ENCODE measurements at regions of chr2 and their contacts with region 1.

Region 1: DNA sequence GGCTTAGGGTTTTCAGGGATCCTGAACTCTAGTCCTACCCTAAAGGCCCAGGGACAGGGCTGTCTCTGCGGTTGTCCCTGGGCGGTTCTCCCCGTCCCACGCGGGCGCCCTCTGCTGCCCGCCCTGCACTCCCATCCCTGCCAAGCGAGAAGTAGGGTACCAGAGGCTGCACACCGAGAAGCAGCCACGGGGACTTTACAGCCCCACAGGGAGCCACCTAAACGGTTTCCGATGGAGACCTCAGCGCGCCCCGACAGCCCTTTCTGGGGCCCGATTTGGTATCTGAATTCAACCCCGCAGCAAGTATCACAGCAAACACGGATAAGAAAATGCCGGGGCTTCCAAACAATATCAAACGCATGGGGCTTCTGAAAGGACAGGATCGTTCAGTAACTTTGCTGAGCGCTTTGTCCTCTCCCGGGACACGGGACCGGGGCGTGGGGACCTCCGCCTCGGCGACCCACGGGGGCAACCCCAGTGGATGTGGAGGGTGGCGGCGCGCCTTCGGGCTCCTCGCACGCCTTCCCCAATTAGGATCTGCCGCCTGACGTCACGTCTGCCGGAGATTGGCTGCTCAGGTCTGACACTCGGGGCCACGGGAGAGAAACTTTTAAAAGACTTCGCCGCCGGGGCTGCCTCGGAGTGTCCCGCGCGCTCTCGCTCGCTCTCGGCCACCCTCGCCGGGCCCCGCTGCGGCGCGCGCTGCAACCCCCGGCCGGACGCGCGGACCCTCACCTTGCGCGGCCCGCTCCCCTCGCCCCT is at the start of gene LTBP1:
- DNase-seq: peak; percentile 85 to 92 (median 87)
- ATAC-seq: peak; percentile 84 to 93 (median 87)
- H3K4me3 ChIP-seq: peak within 1 kb of the TSS; percentile 56 to 94 (median 79)
- H3K27ac ChIP-seq: peak within 1 kb of the TSS; percentile 76 to 95 (median 91)
- H3K4me1 ChIP-seq: peaks cover 0 to 33% (median 7%) of the 10 kb centered on the region in 12 donors
- H3K27me3 ChIP-seq: peaks cover 0 to 24% (median 0%) of the 10 kb centered on the region in 9 donors
- CTCF ChIP-seq: peak; percentile 62 to 93 (median 78)
- POLR2A ChIP-seq: peak in 1 of 2 donors; percentile 80
- total RNA-seq, gene LTBP1: 63.4 to 150 (median 103) TPM

Region 2: DNA sequence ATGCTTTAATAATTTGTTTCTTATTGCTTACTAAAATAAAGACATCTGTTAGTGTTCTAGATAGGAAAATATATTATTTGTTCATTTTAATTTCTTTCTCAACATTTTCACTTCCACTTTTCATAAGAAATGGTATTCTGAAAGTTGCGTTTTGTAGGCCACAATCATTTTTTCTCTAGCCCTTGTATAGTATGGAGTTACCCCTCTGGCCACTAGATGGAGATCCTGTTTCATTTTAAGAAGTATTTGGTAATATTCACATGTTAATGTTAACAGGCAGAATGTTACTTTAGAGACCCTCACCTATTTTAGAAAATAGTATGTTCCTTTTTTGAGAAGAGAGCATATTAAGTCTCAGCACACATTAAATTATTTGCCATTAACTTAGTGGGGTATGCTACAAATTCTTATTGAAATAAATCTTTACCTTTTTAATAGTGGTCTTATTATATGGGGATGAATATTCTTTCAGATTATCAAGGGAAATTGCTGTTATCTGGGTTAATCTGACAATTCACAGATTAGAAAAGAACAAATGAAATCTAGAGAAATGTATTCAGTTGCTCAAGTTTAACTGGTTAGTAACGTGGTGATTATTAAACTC is 392.6 kb before region 1 on chr2:
- intact Hi-C with region 1: loop called in 1 of 10 experiments (anchors 10 kb)
- DNase-seq: no peak
- ATAC-seq: peak in 3 of 4 donors; percentile 63 to 73 (median 64)
- H3K4me3 ChIP-seq: no peak overlapping the region
- H3K27ac ChIP-seq: no peak overlapping the region
- H3K4me1 ChIP-seq: peaks cover 0 to 5% (median 0%) of the 10 kb centered on the region in 12 donors
- H3K27me3 ChIP-seq: no peaks in the 10 kb centered on the region
- CTCF ChIP-seq: peak; percentile 57 to 81 (median 72)
- POLR2A ChIP-seq: no peak

Region 3: DNA sequence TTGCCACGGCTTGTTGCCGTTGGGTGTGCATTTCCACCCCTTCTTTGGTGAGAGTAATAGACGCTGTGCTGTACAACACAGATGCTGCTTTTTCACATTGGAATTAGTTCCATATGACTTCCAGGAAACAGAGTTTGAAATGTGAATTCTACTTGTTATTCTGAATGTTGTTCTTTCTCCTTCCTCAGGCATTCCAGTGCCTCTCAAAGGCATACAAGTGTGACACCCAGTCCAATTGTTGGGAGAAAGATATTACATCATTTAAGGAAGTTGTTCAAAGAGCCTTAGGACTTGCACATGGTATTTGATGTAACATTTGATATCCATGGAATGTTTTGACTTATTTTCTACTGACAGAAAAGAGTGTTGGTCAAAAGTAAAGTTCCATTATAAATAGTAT is 134.2 kb before region 1 on chr2:
- intact Hi-C with region 1: no loop called
- DNase-seq: no peak
- ATAC-seq: no peak
- H3K4me3 ChIP-seq: no peak overlapping the region
- H3K27ac ChIP-seq: no peak overlapping the region
- H3K4me1 ChIP-seq: peaks cover 0 to 7% (median 0%) of the 10 kb centered on the region in 12 donors
- H3K27me3 ChIP-seq: no peaks in the 10 kb centered on the region
- CTCF ChIP-seq: no peak
- POLR2A ChIP-seq: no peak

Region 4: GRCh38 chr2:32849456-32850194 is 96.9 kb before region 1 on chr2:
- intact Hi-C with region 1: loop called in 1 of 10 experiments (anchors 10 kb)
- DNase-seq: peak in 1 of 5 donors; percentile 33
- ATAC-seq: peak in 3 of 4 donors; percentile 52 to 57 (median 54)
- H3K4me3 ChIP-seq: no peak overlapping the region
- H3K27ac ChIP-seq: no peak overlapping the region
- H3K4me1 ChIP-seq: no peaks in the 10 kb centered on the region
- H3K27me3 ChIP-seq: no peaks in the 10 kb centered on the region
- CTCF ChIP-seq: no peak
- POLR2A ChIP-seq: no peak

Region 5: DNA sequence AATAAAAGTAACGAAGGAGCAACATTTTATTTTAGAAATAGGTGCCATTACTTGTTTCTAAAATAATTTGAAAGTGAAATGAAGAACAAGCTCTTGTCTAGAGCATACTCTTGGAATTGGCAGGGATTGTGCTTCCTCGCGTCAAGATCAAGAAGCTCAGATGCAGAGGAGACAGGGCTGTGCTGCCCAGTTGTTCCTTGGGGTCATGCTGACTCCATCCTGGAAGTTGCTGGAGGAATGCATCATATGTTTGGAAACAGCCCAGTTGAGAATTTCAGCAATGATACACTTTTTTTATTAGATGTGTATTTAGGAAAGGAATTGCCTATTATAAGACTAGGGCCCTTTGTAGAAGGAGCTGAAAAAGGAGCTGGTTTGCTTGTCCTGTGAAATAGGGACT is 17.4 kb after region 1 on chr2:
- intact Hi-C with region 1: no loop called
- DNase-seq: peak in 1 of 5 donors; percentile 32
- ATAC-seq: no peak
- H3K4me3 ChIP-seq: no peak overlapping the region
- H3K27ac ChIP-seq: no peak overlapping the region
- H3K4me1 ChIP-seq: peaks cover 0 to 45% (median 19%) of the 10 kb centered on the region in 12 donors
- H3K27me3 ChIP-seq: no peaks in the 10 kb centered on the region
- CTCF ChIP-seq: no peak
- POLR2A ChIP-seq: no peak

Region 6: GRCh38 chr2:33022989-33023727 is 76.7 kb after region 1 on chr2:
- intact Hi-C with region 1: loop called in 5 of 10 experiments (anchors 5 to 10 kb)
- DNase-seq: no peak
- ATAC-seq: peak in 1 of 4 donors; percentile 49
- H3K4me3 ChIP-seq: no peak overlapping the region
- H3K27ac ChIP-seq: peak overlapping the region in 9 of 12 donors; percentile 1 to 56 (median 43)
- H3K4me1 ChIP-seq: peaks cover 0 to 38% (median 15%) of the 10 kb centered on the region in 12 donors
- H3K27me3 ChIP-seq: no peaks in the 10 kb centered on the region
- CTCF ChIP-seq: no peak
- POLR2A ChIP-seq: no peak

Region 7: DNA sequence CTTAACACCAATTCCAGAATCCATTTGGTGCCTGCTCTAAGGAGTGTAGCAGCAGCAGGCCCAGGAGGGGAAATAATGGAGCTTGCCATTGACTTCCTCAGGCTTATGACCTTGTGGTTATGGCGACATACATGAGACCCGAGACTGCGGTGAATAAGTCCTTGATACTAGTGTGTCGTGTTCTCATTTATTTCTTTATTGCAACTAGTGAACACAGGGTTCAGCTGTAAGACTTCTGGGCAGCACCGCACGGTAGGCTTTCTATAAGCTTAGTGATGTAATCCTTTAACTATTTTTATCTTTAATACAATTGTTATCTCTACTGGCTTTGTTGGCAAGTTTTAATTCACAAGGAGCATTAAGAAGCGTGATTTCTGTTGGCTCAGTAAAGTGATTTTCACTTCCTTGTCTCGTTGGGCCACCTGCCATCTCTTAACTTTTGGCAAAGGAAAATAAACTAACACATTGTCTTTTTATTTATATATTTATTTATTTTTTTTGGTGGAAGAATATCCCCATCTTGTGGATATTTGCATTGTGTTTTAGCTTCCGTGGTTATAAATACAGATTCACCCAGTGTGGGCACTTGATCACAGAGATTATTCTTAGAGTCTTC is 140.0 kb after region 1 on chr2:
- intact Hi-C with region 1: loop called in 1 of 10 experiments (anchors 5 kb)
- DNase-seq: peak in 3 of 5 donors; percentile 30 to 54 (median 47)
- ATAC-seq: peak; percentile 3 to 54 (median 46)
- H3K4me3 ChIP-seq: peak overlapping the region in 1 of 12 donors; percentile 9
- H3K27ac ChIP-seq: peak overlapping the region in 6 of 12 donors; percentile 0 to 44 (median 23)
- H3K4me1 ChIP-seq: peaks cover 3 to 52% (median 29%) of the 10 kb centered on the region in 12 donors
- H3K27me3 ChIP-seq: no peaks in the 10 kb centered on the region
- CTCF ChIP-seq: peak in 7 of 12 donors; percentile 22 to 47 (median 37)
- POLR2A ChIP-seq: no peak

Region 8: GRCh38 chr2:33441235-33441810 is 494.8 kb after region 1 on chr2:
- intact Hi-C with region 1: loop called in 1 of 10 experiments (anchors 10 kb)
- DNase-seq: peak in 4 of 5 donors; percentile 56 to 64 (median 61)
- ATAC-seq: peak; percentile 66 to 85 (median 82)
- H3K4me3 ChIP-seq: no peak overlapping the region
- H3K27ac ChIP-seq: peak overlapping the region in 7 of 12 donors; percentile 10 to 74 (median 52)
- H3K4me1 ChIP-seq: peaks cover 0 to 45% (median 18%) of the 10 kb centered on the region in 12 donors
- H3K27me3 ChIP-seq: no peaks in the 10 kb centered on the region
- CTCF ChIP-seq: peak; percentile 51 to 83 (median 71)
- POLR2A ChIP-seq: no peak